ENCODE measurements at regions of chr10 and their contacts with region 1.

Region 1: DNA sequence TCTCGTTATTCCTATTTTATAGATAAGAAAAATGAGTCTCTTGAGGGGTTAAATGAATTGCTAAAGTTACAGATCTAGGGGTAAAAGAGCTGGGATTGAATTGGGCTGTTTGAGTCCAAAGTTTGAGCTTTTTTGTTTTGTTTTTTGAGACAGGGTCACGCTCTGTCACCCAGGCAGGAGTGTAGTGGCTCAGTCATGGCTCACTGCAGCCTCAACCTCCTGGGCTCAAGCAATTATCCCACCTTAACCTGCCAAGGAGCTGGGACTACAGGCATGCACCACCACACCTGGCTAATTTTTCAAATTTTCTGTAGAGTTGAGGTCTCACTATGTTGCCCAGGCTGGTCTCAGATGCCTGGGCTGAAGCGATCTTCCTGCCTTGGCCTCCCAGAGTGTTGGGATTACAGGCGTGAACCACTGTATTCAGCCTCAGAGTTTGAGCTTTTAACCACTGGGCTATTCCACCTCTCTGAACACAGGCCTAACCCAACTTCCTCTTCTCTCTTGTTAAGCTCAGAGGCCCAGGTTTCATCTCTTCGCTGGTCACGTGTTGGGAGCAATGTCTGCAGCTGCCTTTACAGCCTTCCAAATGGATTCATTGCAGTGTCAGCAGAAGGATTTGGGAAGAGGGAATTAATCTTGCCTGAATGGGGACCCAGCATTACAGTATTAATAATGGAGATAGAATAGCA is 8.0 kb downstream of the SUFU start:
- DNase-seq: no peak
- ATAC-seq: no peak
- H3K4me3 ChIP-seq: no peak overlapping the region
- H3K27ac ChIP-seq: no peak overlapping the region
- H3K4me1 ChIP-seq: peaks cover 19 to 26% of the 10 kb centered on the region in 2 donors
- H3K27me3 ChIP-seq: no peaks in the 10 kb centered on the region
- CTCF ChIP-seq: no peak
- POLR2A ChIP-seq: no peak

Region 2: DNA sequence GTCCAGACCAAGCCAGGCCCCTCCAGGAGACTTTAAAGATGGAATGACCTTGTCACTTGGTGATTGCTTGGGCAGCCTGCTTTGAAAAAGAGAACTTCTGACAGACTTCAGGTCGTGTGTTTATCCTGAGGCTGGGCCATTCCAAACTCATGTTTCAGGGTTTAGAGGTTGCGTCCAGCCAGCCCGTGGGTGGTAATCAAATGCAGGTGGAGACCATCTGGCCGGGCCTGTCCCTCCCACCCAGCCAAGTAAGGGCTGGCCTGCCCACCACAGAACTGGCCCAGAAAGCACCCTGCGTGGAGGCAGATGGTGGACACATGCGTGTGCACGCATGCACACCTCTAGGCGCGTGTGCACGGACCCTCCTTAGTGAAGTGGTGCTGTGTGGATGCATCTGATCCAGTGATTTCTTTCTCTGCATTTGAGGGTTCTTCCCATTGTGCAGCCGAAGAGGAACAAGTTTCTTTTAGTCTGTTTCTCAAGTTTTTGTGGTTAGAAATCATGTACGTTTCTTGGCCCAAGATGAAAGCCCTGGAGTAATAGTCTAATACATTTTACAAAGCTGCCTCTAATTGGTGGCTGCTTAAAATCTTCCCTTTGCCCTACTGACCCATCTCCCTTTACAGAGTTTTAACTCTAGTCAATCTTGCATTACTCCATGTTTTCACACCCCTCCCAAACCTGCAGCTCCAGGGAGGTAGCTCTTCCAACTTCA is 35.0 kb after region 1 on chr10:
- in situ Hi-C with region 1: no loop called
- intact Hi-C with region 1: no loop called
- DNase-seq: no peak
- ATAC-seq: no peak
- H3K4me3 ChIP-seq: no peak overlapping the region
- H3K27ac ChIP-seq: no peak overlapping the region
- H3K4me1 ChIP-seq: peaks cover 16 to 26% of the 10 kb centered on the region in 2 donors
- H3K27me3 ChIP-seq: no peaks in the 10 kb centered on the region
- CTCF ChIP-seq: no peak
- POLR2A ChIP-seq: no peak

Region 3: DNA sequence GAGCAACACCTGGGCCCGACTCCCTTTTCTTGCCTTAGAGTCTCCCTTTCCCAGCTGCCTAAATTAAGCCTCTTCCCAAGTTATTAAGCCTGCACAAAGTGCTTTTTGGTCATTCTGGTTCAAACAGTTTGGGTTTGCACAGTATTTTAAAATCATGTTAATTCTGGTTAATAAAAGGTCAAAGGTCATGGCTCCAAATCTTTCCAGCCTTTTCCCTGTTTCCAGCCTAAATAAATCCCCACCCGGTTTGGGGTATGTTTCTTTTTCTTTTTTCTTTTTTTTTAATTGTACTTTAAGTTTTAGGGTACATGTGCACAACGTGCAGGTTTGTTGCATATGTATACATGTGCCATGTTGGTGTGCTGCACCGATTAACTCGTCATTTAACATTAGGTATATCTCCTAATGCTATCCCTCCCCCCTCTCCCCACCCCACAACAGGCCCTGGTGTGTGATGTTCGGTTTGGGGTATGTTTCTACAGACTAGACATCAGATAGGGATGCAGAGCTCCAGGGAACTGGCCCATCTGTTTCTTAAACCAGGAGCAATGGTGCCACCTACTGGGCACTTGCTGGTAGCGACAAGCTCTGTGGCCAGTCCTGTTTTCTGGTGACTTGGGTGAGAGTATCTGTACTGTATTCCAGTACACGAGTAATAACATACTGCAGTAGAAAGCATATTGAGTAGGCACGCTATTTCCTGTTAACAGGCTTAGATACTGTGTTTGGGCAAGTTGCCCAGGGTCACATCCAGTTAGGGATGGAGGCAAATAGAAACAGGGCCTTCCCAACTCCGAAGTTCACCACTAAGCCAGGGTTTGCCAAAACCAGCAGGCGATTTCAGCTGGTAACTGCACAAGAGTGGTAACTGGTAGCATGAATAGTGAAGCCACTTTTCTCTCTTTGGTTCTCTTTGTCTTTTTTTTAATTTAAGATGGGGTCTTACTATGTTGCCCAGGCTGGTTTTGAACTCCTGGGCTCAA is 72.0 kb after region 1 on chr10:
- in situ Hi-C with region 1: loop called in 1 of 4 experiments (anchors 5 kb)
- intact Hi-C with region 1: no loop called
- DNase-seq: peak; percentile 69 to 80
- ATAC-seq: peak; percentile 91 to 96
- H3K4me3 ChIP-seq: no peak overlapping the region
- H3K27ac ChIP-seq: no peak overlapping the region
- H3K4me1 ChIP-seq: peaks cover 3 to 22% of the 10 kb centered on the region in 2 donors
- H3K27me3 ChIP-seq: no peaks in the 10 kb centered on the region
- CTCF ChIP-seq: peak; percentile 85 to 89 (median 87)
- POLR2A ChIP-seq: no peak

Region 4: DNA sequence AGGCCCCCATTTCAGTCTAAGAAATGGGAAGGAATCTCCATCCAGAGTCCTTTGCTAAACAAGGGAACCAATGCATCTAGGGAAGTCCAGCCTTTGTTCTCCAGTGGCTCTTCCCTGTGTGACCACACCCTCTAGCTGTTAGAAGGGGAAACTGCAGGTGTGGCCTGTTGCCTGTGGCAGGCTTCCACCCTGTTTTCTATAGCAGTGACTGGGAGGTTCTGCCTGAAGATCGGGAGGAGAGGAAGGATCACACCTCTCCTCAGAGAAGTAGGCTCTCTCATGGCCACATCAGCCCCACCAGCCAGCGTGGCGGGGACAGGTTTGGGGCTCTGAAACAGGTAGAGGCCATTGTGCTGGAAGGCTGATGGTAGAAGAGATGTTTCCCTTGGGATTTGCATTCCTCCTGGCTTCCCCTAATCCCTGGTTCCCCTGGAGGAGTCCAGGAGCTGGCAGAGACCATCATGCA is 84.8 kb after region 1 on chr10:
- in situ Hi-C with region 1: loop called in 2 of 4 experiments (anchors 5 to 10 kb)
- intact Hi-C with region 1: no loop called
- DNase-seq: peak in 1 of 2 donors; percentile 66
- ATAC-seq: peak; percentile 65 to 84
- H3K4me3 ChIP-seq: no peak overlapping the region
- H3K27ac ChIP-seq: peak overlapping the region; percentile 26 to 79 (median 60)
- H3K4me1 ChIP-seq: peaks cover 46 to 56% of the 10 kb centered on the region in 2 donors
- H3K27me3 ChIP-seq: no peaks in the 10 kb centered on the region
- CTCF ChIP-seq: peak; percentile 76 to 86 (median 79)
- POLR2A ChIP-seq: no peak

Measured in gastrocnemius medialis (tissue), 4 donors.